Endothelial cell of umbilical vein (primary cell): ENCODE measurements at regions of chr7 and their contacts with region 1.

Region 1: GRCh38 chr7:21939136-21939857 is 6.4 kb downstream of the CDCA7L start:
- DNase-seq: peak; percentile 88
- H3K4me3 ChIP-seq: no peak overlapping the region
- H3K27ac ChIP-seq: peak overlapping the region; percentile 34
- H3K4me1 ChIP-seq: peaks cover 46% of the 10 kb centered on the region
- H3K27me3 ChIP-seq: no peaks in the 10 kb centered on the region
- CTCF ChIP-seq: no peak
- POLR2A ChIP-seq: no peak

Region 2: DNA sequence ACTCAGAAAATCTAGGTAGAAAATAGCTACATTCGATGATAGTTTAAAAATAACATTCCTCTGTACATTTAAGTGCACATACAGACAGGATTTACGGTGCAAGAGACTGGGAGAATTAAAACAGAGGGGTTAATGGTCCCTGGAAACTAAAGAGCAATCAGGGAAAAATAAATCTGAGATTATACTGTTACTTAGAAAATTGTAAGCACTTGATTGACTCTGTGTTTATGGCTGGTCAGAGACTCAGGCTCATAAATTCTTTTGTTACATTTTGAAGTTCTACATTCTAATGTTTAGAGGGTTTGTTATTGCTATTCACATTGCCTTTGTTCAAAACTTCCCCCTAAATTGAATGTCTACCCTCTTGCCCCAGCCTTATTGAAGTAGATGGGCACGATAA is 48.0 kb before region 1 on chr7:
- CTCF ChIA-PET with region 1: no interaction called
- POLR2A ChIA-PET with region 1: no interaction called
- dilution Hi-C with region 1: no loop called
- intact Hi-C with region 1: no loop called
- DNase-seq: no peak
- H3K4me3 ChIP-seq: no peak overlapping the region
- H3K27ac ChIP-seq: no peak overlapping the region
- H3K4me1 ChIP-seq: no peaks in the 10 kb centered on the region
- H3K27me3 ChIP-seq: no peaks in the 10 kb centered on the region
- CTCF ChIP-seq: no peak
- POLR2A ChIP-seq: no peak

Region 3: DNA sequence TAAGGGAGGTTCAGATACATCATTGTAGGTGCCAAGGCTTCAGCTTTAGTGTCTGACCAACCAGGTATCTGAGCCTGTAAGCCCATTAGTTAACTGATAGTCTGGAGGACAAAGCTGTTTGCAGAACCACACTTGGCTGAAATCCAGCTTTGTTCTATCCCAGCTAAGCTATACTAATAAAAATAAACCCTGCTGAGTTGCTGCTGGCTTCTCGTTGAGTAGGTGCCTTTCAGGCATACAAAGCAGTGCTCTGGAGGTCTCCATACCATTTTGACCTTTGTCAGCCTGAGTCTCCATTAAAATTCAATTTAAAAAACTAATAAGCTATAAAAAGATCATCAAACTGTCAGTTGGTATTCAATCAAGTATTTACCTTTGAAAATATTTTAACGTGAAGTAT is 15.6 kb before region 1 on chr7:
- CTCF ChIA-PET with region 1: interaction called, 8 read pairs
- POLR2A ChIA-PET with region 1: interaction called, 5 read pairs
- dilution Hi-C with region 1: no loop called
- intact Hi-C with region 1: loop called (anchors 1 kb)
- DNase-seq: peak; percentile 87
- H3K4me3 ChIP-seq: no peak overlapping the region
- H3K27ac ChIP-seq: peak overlapping the region; percentile 56
- H3K4me1 ChIP-seq: peaks cover 24% of the 10 kb centered on the region
- H3K27me3 ChIP-seq: no peaks in the 10 kb centered on the region
- CTCF ChIP-seq: no peak
- POLR2A ChIP-seq: no peak

Region 4: GRCh38 chr7:21960922-21961321 is 21.6 kb after region 1 on chr7:
- CTCF ChIA-PET with region 1: no interaction called
- POLR2A ChIA-PET with region 1: no interaction called
- dilution Hi-C with region 1: no loop called
- intact Hi-C with region 1: no loop called
- DNase-seq: peak; percentile 80
- H3K4me3 ChIP-seq: no peak overlapping the region
- H3K27ac ChIP-seq: peak overlapping the region; percentile 41
- H3K4me1 ChIP-seq: peaks cover 10% of the 10 kb centered on the region
- H3K27me3 ChIP-seq: no peaks in the 10 kb centered on the region
- CTCF ChIP-seq: no peak
- POLR2A ChIP-seq: no peak

Region 5: GRCh38 chr7:22025968-22026367 is 86.7 kb after region 1 on chr7:
- CTCF ChIA-PET with region 1: no interaction called
- POLR2A ChIA-PET with region 1: no interaction called
- dilution Hi-C with region 1: no loop called
- intact Hi-C with region 1: no loop called
- DNase-seq: no peak
- H3K4me3 ChIP-seq: no peak overlapping the region
- H3K27ac ChIP-seq: no peak overlapping the region
- H3K4me1 ChIP-seq: no peaks in the 10 kb centered on the region
- H3K27me3 ChIP-seq: peaks cover 2 to 5% of the 10 kb centered on the region in 2 experiments
- CTCF ChIP-seq: no peak
- POLR2A ChIP-seq: no peak

Region 6: GRCh38 chr7:22127835-22128527 is 188.7 kb after region 1 on chr7:
- CTCF ChIA-PET with region 1: no interaction called
- POLR2A ChIA-PET with region 1: no interaction called
- dilution Hi-C with region 1: no loop called
- intact Hi-C with region 1: no loop called
- DNase-seq: peak; percentile 97
- H3K4me3 ChIP-seq: no peak overlapping the region
- H3K27ac ChIP-seq: peak overlapping the region; percentile 91
- H3K4me1 ChIP-seq: peaks cover 55% of the 10 kb centered on the region
- H3K27me3 ChIP-seq: no peaks in the 10 kb centered on the region
- CTCF ChIP-seq: no peak
- POLR2A ChIP-seq: no peak